Cardiac septum (tissue), 1 donor: ENCODE measurements at regions of chr4 and their contacts with region 1.

Region 1: DNA sequence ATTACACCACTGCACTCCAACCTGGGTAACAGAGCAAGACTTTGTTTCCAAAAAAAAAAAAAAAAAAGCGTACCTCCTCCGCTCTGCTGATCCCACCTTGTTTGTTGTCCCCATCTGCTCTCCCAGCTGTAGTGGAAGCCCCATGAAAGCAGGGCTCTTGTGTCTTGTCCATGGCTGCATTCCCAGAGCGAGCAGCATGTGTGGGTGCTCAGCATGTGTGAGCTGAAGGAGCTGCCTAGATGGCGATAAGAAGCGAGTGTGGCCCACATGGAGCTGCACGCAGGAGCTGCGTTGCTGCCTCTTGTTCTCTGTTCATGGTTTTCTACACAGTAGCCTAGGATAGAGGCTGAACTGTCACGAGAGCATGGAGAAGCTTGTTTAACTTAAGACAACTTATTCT is 12.4 kb downstream of the NSD2 start:
- DNase-seq: no peak

Region 2: DNA sequence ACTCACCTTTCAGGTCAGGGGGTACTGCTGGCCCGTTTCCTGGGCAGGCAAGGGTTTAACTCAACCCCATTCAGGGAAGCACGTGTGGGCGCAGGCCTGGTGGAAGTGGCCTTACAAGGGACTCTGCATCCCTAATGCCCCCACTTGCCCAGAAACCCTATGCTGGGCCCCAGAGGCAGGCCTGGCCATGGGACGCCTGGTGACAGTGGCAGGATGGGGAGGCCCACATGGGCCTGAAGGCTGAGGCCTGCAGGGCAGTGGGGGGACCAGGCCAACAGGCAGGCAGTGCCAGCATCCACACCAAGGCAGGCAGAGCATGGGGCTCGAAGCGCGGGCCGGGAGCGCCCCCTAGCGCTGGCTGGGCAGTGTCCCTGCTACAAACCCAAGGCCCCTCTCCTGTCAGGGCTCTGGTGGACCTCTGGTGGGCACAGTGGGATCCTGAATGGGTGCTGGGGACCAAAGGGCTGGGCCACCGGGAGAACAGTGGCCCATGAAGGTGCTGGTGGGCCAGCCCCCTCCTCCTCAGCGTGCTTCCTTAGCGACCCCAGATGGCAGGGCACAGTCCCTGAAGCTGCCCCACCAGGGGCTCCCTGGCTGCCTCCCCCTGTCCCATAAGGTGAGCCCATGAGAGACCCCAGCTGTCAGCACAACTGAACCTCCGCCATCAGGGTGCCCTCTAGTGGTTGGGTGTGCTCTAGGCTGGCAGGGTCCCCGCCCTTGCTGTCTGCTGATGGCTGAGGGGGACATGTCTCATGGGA is 73.7 kb before region 1 on chr4:
- intact Hi-C with region 1: no loop called
- DNase-seq: no peak

Region 3: DNA sequence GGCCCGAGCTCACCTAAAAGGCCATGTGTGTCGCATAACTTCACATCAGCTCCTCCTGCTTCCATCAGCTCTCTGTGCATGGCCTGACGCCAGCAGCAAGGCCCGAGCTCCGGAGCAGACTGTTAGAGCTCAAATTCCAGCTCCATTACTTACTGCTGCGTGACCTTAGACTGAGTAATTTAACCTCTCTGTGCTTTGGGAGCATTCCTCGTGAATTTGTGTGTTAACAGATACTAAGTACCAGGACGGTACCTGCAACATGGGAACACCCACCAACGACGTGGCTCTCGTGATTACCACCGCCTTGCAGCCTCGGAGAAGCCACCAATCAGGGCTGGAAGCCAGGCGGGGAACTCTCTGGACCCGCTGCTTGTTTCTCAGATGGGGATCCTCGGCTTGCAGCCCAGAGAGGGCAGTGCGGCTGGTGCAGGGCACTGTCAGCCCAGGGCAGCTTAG is 40.6 kb before region 1 on chr4:
- intact Hi-C with region 1: loop called (anchors 5 kb)
- DNase-seq: no peak

Region 4: GRCh38 chr4:1899149-1900086 is 15.8 kb after region 1 on chr4:
- intact Hi-C with region 1: no loop called
- DNase-seq: peak; percentile 89

Region 5: GRCh38 chr4:2095789-2096570 is 212.4 kb after region 1 on chr4:
- intact Hi-C with region 1: no loop called
- DNase-seq: no peak